Activated CD4-positive, alpha-beta T cell treated with anti-CD3 and anti-CD28 coated beads, Interleukin-2, amount 10 ng/mL, durations not matched to agents 24 days and 14 days (primary cell): ENCODE measurements at regions of chr22 and their contacts with region 1.

Region 1: DNA sequence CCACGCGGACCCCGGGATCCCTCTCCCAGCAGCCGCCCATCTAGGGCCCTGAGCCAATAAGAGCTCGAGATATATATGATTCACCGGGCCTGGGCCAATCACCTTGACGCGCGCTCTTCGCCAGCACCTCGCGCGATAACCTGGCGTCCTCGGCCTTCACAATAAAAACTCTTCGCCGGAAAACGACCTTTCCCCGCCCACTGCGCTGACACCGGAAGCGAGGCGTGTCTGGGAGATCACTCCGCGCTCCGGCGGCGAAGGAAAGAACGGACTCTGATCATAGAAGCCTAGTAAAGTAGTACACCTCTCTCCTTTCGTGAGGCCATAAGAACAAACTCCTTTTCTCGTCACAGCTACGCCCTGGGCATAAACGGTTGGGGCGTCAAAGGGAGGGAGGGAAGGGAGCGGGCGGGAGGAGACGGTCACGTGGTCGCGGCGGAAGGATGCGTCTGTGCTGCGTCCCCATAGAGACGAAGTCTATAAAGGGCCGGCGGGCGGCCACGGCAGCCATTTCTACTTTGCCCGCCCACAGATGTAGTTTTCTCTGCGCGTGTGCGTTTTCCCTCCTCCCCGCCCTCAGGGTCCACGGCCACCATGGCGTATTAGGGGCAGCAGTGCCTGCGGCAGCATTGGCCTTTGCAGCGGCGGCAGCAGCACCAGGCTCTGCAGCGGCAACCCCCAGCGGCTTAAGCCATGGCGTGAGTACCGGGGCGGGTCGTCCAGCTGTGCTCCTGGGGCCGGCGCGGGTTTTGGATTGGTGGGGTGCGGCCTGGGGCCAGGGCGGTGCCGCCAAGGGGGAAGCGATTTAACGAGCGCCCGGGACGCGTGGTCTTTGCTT is at the start of gene ATF4:
- DNase-seq: peak; percentile 99
- H3K4me3 Mint-ChIP-seq: peak within 1 kb of the TSS; percentile 93
- H3K27ac Mint-ChIP-seq: peak within 1 kb of the TSS; percentile 98
- H3K4me1 Mint-ChIP-seq: peaks cover 50% of the 10 kb centered on the region
- H3K27me3 Mint-ChIP-seq: peaks cover 2% of the 10 kb centered on the region
- total RNA-seq, gene ATF4: 392 and 393 TPM in 2 replicates

Region 2: GRCh38 chr22:39392341-39392948 is 127.8 kb before region 1 on chr22:
- intact Hi-C with region 1: no loop called
- DNase-seq: no peak
- H3K4me3 Mint-ChIP-seq: no peak overlapping the region
- H3K27ac Mint-ChIP-seq: no peak overlapping the region
- H3K4me1 Mint-ChIP-seq: peaks cover 5% of the 10 kb centered on the region
- H3K27me3 Mint-ChIP-seq: no peaks in the 10 kb centered on the region

Region 3: DNA sequence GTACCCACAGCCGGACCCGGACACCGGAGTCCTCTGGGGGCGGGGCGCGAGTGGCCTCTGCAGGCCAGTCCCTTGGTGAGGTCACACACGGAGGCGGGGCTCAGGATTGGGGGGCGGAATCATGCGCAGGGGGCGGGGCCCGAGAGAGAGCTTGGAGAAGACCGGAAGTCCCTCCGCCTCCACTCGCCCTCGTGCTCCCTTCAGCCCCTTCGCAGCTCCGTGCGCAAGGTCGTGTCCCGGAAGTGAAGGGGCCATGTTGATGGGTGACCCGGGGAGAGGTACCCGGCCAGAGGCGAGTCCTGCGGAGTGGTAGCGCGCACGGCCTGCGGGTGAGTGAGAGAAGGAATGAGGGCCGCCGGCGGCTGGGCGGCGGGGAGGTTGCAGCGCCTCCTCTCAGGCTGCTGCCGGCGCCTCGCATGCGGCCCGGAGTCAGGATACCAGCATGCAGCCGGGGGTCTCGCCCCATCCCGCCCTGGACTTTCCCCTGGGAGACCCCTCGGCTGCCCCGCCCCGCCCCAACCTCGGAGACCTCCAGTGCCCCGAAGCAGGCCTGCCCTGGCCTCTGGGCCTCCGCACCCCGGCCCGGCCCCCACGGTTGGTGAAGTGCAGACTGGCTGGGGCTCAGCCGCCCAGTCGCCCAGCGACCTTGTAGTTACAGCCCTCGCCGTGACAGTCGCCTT is 18.0 kb before region 1 on chr22 and contains the start of gene MIEF1:
- intact Hi-C with region 1: loop called (anchors 1 kb)
- DNase-seq: peak; percentile 97
- H3K4me3 Mint-ChIP-seq: peak within 1 kb of the TSS; percentile 100
- H3K27ac Mint-ChIP-seq: peak within 1 kb of the TSS; percentile 98
- H3K4me1 Mint-ChIP-seq: peaks cover 25% of the 10 kb centered on the region
- H3K27me3 Mint-ChIP-seq: peaks cover 3% of the 10 kb centered on the region
- total RNA-seq, gene MIEF1: 53.7 and 54.8 TPM in 2 replicates

Region 4: GRCh38 chr22:39537975-39538374 is 17.7 kb after region 1 on chr22:
- intact Hi-C with region 1: no loop called
- DNase-seq: no peak
- H3K4me3 Mint-ChIP-seq: no peak overlapping the region
- H3K27ac Mint-ChIP-seq: no peak overlapping the region
- H3K4me1 Mint-ChIP-seq: peaks cover 8% of the 10 kb centered on the region
- H3K27me3 Mint-ChIP-seq: peaks cover 8% of the 10 kb centered on the region